ENCODE measurements at regions of chrX and their contacts with region 1.

Region 1: DNA sequence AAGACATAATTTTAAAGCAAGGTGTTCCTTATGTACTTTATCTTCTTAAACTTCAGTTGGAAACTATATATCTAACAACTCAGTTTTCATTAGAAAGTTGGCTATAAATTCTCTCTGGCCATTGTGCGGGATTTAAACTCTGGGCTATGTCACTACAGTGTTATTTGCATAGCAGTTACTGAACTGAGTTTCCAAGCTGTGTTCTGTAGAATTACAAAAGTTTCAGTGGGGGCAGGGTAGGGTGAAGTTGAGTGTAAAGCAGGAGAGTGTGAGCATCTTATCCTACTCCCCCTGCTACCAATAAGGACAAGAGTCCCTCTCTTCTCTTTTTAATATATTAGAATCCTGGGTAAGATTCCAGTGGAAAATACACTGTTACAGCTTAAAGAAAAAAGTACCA is 254.5 kb upstream of the SLITRK2 start:
- DNase-seq: no peak
- ATAC-seq: no peak
- H3K4me3 ChIP-seq: no peak overlapping the region
- H3K27ac ChIP-seq: no peak overlapping the region
- H3K4me1 ChIP-seq: no peaks in the 10 kb centered on the region
- H3K27me3 ChIP-seq: no peaks in the 10 kb centered on the region
- CTCF ChIP-seq: no peak
- POLR2A ChIP-seq: no peak

Region 2: GRCh38 chrX:145549496-145549895 is 13.7 kb before region 1 on chrX:
- intact Hi-C with region 1: loop called in 1 of 10 experiments (anchors 1 kb)
- DNase-seq: no peak
- ATAC-seq: no peak
- H3K4me3 ChIP-seq: no peak overlapping the region
- H3K27ac ChIP-seq: no peak overlapping the region
- H3K4me1 ChIP-seq: no peaks in the 10 kb centered on the region
- H3K27me3 ChIP-seq: no peaks in the 10 kb centered on the region
- CTCF ChIP-seq: no peak
- POLR2A ChIP-seq: no peak

Measured in heart left ventricle (tissue), 16 donors.